Dorsolateral prefrontal cortex (tissue), 120 donors: ENCODE measurements at regions of chr6 and their contacts with region 1.

Region 1: DNA sequence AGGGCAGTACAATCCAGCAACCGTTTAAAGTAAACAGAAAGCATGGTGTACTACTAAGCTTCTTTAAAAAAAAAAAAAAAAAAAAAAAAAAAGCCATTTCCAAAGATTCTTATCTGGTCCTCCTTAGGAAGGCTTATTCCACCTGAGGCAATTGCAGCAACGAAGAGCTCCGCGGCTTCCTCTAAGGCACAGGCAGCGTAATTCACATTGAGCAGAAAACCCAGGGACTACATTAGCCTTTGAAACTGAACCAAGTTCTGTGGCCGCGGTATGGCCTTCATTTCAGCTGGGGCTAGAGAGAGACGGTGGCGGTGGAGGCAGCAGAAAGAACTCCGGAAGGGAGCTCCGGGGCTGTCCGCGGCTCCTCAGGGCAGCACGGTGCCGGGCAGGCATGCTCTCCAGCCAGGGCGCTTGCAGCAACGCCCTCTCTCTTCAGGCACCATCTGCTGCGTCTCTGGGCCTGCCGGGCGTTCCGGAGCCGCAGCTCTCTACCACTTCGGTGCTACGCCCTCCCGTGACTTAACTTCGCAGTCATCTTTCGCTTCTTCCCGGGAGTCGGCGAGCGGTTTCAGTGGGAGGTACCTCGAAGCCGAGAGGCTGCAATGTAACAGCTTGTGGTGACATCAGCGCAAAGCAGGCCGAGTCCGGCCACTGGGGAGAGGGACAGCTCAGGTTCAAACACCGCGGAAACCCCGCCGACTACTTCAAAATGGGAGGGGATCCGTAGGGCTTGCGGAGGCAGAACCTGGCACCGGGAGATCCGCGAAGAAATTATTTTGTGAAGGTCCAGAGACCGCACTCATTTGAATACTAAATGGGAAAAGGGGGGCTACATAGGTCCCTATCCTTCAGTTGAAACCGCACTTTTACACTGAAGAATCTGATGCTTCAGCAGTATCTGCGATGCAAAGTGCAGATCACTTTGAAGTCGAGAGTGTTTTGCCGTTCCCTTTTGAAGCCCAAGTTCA is 100.0 kb downstream of the DST start:
- DNase-seq: peak; percentile 58 to 91 (median 85)
- H3K4me3 ChIP-seq: peak overlapping the region; percentile 34 to 80 (median 64)
- H3K27ac ChIP-seq: peak overlapping the region; percentile 6 to 94 (median 84)
- H3K27me3 ChIP-seq: no peaks in the 10 kb centered on the region
- CTCF ChIP-seq: peak in 54 of 56 donors; percentile 24 to 74 (median 51)

Region 2: DNA sequence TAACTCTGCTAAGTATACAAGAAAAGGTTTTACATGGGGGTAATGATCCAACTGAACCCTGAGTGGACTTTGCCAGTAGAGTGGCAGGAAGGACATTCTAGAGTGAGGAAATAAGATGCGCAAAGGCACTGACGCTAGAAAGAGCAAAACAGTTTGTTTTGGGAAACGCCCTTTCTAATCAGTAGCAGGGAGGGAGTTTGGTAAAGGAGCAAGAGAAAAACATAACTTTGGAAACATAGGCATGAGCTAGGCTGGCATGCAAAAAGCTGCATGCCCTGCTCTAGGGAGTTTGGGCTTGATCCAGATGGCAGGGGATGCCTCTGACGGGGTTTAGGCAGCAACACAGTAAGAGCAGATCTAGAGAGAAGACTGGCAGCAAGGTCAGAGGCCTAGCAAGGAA is 35.1 kb before region 1 on chr6:
- intact Hi-C with region 1: loop called in 1 of 2 experiments (anchors 5 kb)
- DNase-seq: no peak
- H3K4me3 ChIP-seq: no peak overlapping the region
- H3K27ac ChIP-seq: peak overlapping the region in 39 of 59 donors; percentile 4 to 66 (median 25)
- H3K27me3 ChIP-seq: no peaks in the 10 kb centered on the region
- CTCF ChIP-seq: no peak